K562 (cell line): ENCODE measurements at regions of chr7 and their contacts with region 1.

Region 1: GRCh38 chr7:23467806-23468516 is 2.3 kb downstream of the IGF2BP3 start:
- DNase-seq: peak; percentile 14 to 77 (median 33)
- ATAC-seq: peak; percentile 19
- H3K4me3 ChIP-seq: peak overlapping the region; percentile 66
- H3K27ac ChIP-seq: peak overlapping the region; percentile 93
- H3K4me1 ChIP-seq: peaks cover 25 to 27% of the 10 kb centered on the region in 2 experiments; a peak in 4 of 5 replicates
- H3K27me3 ChIP-seq: no peaks in the 10 kb centered on the region
- CTCF ChIP-seq: no peak
- EP300 ChIP-seq: no peak; the same call in 1 of the 2 replicates
- POLR2A ChIP-seq: no peak; the same call in 1 of the 2 replicates
- RAD21 ChIP-seq: no peak

Region 2: GRCh38 chr7:23449941-23450340 is 18.0 kb before region 1 on chr7:
- CTCF ChIA-PET with region 1: no interaction called
- POLR2A ChIA-PET with region 1: interaction called, 12 read pairs
- in situ Hi-C with region 1: no loop called
- intact Hi-C with region 1: no loop called
- DNase-seq: no peak
- ATAC-seq: no peak
- H3K4me3 ChIP-seq: no peak overlapping the region
- H3K27ac ChIP-seq: no peak overlapping the region
- H3K4me1 ChIP-seq: no peaks in the 10 kb centered on the region; a peak in 1 of 5 replicates
- H3K27me3 ChIP-seq: no peaks in the 10 kb centered on the region
- CTCF ChIP-seq: no peak
- EP300 ChIP-seq: no peak
- POLR2A ChIP-seq: no peak
- RAD21 ChIP-seq: no peak